Dorsolateral prefrontal cortex (tissue), 120 donors: ENCODE measurements at regions of chr5 and their contacts with region 1.

Region 1: DNA sequence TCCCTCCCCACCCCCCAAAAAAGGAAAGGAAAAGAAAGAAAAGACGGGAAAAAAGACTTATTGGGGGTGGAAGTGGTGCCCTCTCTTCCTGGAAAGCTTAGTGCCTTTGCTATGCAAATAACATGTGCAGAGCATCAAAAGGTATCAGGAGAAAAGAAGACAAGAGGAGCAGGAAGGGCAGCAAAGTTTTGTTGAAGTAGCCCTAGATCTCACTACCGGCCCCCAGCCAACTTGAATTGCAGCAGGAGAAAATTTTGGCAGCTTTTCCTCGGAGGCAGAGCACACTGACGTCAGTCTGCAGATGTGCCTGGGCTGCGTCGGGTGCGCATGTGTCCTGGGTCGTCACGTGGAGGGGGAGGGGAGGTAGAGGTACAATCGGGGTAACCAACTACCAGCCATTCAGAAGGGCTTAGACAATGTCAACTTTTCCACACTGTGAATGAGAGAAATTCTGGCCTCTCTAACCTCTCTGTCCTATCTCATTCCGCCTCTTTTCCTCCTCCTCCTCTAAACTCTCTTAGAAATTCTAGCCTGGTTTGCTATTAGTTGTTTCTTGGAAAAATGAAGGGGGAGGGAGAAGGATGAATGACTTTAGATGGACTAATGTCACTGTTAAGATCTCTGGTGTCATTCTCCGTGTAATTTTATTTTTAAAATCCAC is at the start of gene ADAMTS6:
- DNase-seq: peak; percentile 21 to 87 (median 82)
- H3K4me3 ChIP-seq: peak within 1 kb of the TSS; percentile 38 to 80 (median 67)
- H3K27ac ChIP-seq: peak within 1 kb of the TSS; percentile 28 to 94 (median 86)
- H3K27me3 ChIP-seq: peaks cover 0 to 3% (median 0%) of the 10 kb centered on the region in 45 donors
- CTCF ChIP-seq: peak in 7 of 56 donors; percentile 8 to 26 (median 15)
- total RNA-seq, gene ADAMTS6: 0.81 to 7.2 (median 2.9) TPM

Region 2: DNA sequence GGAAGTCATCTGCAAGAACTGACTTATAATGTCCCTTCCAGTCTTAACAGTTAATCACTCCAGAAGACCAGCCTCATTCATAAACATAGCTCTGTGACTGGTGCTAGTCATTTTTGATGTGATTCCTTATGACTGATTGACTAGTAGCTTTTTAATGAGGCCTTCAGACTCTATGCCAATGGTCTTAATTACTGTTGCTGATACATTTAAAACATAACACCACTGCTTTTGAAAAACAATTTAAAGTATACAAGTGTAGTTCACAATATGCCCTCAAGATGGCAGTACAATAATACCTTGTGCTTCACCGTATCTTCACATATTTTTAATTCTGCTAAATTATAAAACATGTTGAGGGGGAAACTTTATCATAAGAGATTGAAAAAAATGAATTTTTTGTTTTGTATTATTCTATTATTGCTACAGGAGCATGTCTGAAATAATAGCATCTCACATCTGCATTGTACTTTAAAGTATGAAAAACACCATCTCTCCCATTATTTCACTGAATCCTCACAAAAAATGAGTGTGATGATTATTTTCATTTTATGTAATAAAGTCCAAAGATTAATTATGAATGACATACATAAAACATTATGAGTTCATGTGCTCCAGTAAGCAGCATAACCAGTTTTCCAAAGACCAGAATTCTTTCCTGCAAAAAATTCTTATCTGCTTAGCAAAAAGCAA is 846.6 kb before region 1 on chr5:
- intact Hi-C with region 1: loop called in 1 of 2 experiments (anchors 5 kb)
- DNase-seq: no peak
- H3K4me3 ChIP-seq: no peak overlapping the region
- H3K27ac ChIP-seq: no peak overlapping the region
- H3K27me3 ChIP-seq: peaks cover 0 to 6% (median 0%) of the 10 kb centered on the region in 45 donors
- CTCF ChIP-seq: peak; percentile 68 to 96 (median 85)

Region 3: GRCh38 chr5:64811050-64811640 is 670.6 kb before region 1 on chr5:
- intact Hi-C with region 1: loop called (anchors 1 to 5 kb)
- DNase-seq: no peak
- H3K4me3 ChIP-seq: no peak overlapping the region
- H3K27ac ChIP-seq: no peak overlapping the region
- H3K27me3 ChIP-seq: no peaks in the 10 kb centered on the region
- CTCF ChIP-seq: peak; percentile 59 to 93 (median 73)

Region 4: GRCh38 chr5:64958757-64959391 is 522.9 kb before region 1 on chr5:
- intact Hi-C with region 1: loop called (anchors 2 to 5 kb)
- DNase-seq: no peak
- H3K4me3 ChIP-seq: no peak overlapping the region
- H3K27ac ChIP-seq: no peak overlapping the region
- H3K27me3 ChIP-seq: no peaks in the 10 kb centered on the region
- CTCF ChIP-seq: peak; percentile 49 to 80 (median 64)

Region 5: DNA sequence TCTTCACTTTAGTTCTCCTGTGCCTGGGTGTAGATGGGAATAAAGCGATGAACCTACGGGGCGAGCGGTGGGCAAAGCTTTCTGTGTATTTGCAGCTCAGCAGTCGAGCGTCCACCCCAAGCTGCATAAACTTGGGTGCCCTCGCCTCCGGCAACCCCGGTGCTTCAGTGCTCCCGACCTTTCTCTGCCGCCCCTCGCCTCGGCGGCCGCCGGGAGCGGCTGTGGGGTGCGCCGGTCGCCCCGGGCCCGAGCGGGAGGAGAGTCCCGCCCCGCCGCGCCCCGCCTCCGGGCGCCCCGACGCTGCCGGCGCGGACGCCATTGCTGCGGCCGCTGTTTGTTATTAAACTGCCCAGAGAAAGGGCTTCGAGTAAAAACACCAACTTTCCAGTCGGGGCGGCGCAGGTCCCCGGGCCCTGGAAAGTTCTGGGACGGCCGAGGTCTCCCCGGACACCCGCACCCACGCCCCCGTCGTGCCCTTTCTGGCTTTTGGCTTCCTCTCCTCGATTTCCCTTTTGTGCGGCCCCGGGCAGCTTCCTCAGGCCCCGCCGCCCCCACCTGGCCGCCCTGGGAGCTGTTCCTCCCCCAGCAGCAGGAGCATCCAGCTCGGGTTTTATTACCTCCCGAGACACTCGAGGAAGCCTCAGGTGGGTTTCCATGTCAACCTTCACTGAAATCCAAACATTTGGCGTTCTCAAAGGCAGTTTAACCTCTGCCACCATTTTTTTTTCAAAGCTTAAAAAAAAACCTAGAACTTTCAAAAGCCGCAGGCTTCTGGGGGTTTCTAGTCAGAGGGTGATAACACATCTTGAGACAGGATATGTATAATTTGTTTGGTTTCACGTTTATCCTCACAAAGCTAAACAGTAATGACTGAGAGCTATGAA is 378.7 kb before region 1 on chr5:
- intact Hi-C with region 1: loop called (anchors 5 to 10 kb)
- DNase-seq: peak in 7 of 10 donors; percentile 11 to 65 (median 34)
- H3K4me3 ChIP-seq: peak overlapping the region; percentile 43 to 83 (median 66)
- H3K27ac ChIP-seq: peak overlapping the region in 50 of 59 donors; percentile 18 to 88 (median 68)
- H3K27me3 ChIP-seq: no peaks in the 10 kb centered on the region
- CTCF ChIP-seq: peak in 41 of 56 donors; percentile 12 to 59 (median 35)

Region 6: DNA sequence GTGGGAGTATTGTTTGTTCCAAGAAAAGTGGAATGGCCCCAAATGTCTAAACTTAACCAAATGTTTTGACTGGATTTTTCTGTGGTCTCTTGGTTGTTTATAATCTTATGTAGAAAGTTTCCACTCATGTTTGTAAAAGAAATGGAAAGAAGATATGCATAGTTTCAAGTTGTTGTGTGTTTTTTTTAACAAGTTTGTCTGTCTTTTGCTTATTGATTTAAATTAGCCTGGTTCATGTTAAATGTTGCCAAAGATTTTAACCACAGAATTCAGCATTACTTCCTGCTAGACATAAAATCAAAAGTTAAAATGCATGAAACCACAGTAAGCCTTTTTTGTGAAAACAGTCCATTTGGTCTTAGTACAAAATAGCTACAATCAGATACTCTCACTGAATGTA is 95.4 kb after region 1 on chr5:
- intact Hi-C with region 1: no loop called
- DNase-seq: no peak
- H3K4me3 ChIP-seq: no peak overlapping the region
- H3K27ac ChIP-seq: no peak overlapping the region
- H3K27me3 ChIP-seq: no peaks in the 10 kb centered on the region
- CTCF ChIP-seq: no peak